BJ (cell line): ENCODE measurements at regions of chr20 and their contacts with region 1.

Region 1: DNA sequence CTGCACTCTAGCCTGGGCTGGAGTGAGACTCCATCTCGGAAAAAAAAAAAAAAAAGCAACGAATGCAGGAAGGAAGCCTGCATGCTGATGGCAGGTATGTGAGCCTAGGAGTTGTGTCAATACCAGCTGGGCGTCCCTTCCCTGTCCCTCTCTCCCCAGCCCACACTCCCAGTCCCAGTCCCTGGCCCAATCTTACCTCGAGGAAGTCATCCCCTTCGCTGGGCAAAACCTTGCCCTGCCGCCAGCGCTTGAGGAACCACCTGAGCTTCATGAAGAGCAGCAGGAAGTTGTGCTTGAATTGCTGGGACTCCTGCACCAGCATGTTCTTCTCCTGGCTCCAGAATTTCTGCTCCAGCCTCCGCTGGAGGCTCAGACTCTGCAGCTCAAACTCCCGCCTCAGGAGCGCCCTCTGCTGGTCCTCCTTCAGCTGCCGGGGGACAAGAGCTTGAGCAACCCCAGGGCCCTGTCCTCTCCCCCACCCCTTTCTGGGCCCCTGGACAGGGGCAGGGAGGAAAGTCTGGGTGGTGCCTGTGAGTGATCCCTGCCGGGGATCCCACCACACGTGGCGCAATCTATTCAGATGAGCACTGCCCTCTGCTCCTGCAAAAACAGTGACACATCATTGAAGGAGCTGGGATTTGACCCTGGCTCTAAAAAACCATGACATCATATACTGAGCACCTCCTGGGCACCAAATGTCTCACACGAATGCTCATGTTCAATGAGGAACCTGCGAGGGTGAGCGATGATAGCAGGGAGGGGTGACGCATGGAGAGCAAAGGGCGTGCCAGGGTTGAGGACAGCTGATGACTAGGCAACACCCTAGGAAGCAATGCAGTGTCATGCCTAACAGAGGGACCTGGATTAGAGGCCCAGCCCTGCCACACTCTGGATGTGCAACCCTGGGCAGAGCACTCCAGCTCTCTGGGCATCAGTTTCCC is 35.0 kb upstream of the DSN1 start:
- DNase-seq: no peak
- H3K4me3 ChIP-seq: no peak overlapping the region
- H3K27me3 ChIP-seq: no peaks in the 10 kb centered on the region
- CTCF ChIP-seq: peak; percentile 81

Region 2: GRCh38 chr20:36792422-36792821 is 16.2 kb before region 1 on chr20:
- CTCF ChIA-PET with region 1: interaction called, 32 read pairs
- POLR2A ChIA-PET with region 1: no interaction called
- DNase-seq: no peak
- H3K4me3 ChIP-seq: no peak overlapping the region
- H3K27me3 ChIP-seq: no peaks in the 10 kb centered on the region
- CTCF ChIP-seq: peak; percentile 59

Region 3: DNA sequence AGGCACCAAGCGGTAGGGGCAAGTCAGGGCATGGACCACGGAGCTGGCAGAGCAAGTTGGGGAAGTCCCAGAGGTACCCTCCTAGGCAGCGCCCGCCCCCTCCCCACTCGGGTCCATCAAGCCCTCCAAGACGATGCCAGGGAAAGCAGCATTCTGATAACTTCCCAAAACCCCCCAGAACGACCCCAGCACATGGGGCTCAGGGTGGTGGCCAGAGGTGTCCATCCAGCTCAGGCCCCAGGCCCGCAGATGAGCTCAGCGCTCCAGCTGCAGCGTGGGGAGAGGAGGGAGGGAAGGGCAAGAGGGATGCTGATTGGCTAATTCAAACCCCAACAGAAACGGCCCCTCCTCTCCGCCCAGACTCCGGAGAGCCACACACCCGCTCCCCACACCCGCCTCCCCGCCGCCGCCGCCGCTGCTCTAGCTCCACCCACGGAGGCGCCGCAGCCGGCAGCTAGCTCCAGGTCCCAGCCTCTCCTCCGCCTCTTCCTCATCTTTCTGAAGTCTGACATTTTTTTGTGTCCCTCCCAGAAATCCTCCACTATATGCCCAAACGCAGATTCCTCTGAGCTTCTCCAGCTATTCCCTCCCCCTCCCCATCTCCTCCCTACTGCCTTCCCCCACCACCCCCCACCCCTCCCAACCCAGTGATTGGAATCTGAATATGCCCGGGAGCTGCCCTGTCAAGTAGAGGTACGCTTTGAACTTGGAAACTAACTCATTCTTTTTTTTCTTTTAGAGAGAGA is 27.0 kb after region 1 on chr20:
- CTCF ChIA-PET with region 1: interaction called, 12 read pairs
- POLR2A ChIA-PET with region 1: no interaction called
- DNase-seq: peak; percentile 70
- H3K4me3 ChIP-seq: peak overlapping the region; percentile 13; the same call in 1 of the 2 replicates
- H3K27me3 ChIP-seq: no peaks in the 10 kb centered on the region
- CTCF ChIP-seq: no peak

Region 4: GRCh38 chr20:36847009-36847709 is 38.6 kb after region 1 on chr20:
- CTCF ChIA-PET with region 1: interaction called, 14 read pairs
- POLR2A ChIA-PET with region 1: no interaction called
- DNase-seq: no peak
- H3K4me3 ChIP-seq: no peak overlapping the region
- H3K27me3 ChIP-seq: no peaks in the 10 kb centered on the region
- CTCF ChIP-seq: no peak

Region 5: GRCh38 chr20:36861875-36862801 is 53.6 kb after region 1 on chr20:
- CTCF ChIA-PET with region 1: interaction called, 21 read pairs
- POLR2A ChIA-PET with region 1: no interaction called
- DNase-seq: peak; percentile 45
- H3K4me3 ChIP-seq: peak overlapping the region; percentile 61
- H3K27me3 ChIP-seq: no peaks in the 10 kb centered on the region
- CTCF ChIP-seq: no peak

Region 6: GRCh38 chr20:37680420-37680819 is 871.8 kb after region 1 on chr20:
- CTCF ChIA-PET with region 1: no interaction called
- POLR2A ChIA-PET with region 1: no interaction called
- DNase-seq: no peak
- H3K4me3 ChIP-seq: no peak overlapping the region
- H3K27me3 ChIP-seq: peaks cover 4% of the 10 kb centered on the region
- CTCF ChIP-seq: no peak